ENCODE measurements at regions of chr3 and their contacts with region 1.

Region 1: DNA sequence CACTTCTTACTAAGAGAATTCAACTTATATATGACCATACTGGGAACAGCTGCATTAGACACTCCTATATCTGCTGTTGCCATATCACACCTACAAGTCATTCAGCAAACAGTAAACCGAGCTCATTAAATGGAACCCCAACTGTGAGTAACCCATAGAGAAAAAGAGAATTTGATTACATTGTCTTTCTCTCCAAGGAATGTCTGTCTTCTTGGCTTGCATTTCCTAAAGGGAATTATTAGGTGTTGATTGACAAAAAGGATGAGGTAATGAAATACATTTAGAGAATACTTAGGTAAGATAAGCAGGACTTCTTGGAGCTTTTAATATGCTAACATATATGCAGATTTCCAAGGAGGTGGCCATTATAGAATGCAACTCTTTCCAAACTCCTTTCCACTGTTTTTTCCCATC is 76.8 kb downstream of the SLMAP start:
- DNase-seq: no peak
- ATAC-seq: no peak
- H3K4me3 ChIP-seq: no peak overlapping the region
- H3K27ac ChIP-seq: no peak overlapping the region
- H3K4me1 ChIP-seq: peaks cover 0 to 10% (median 0%) of the 10 kb centered on the region in 9 donors
- H3K27me3 ChIP-seq: no peaks in the 10 kb centered on the region
- CTCF ChIP-seq: no peak

Region 2: GRCh38 chr3:57544181-57545125 is 288.5 kb before region 1 on chr3 and contains the start of gene DNAH12:
- intact Hi-C with region 1: no loop called
- DNase-seq: no peak
- ATAC-seq: peak in 1 of 8 donors; percentile 36
- H3K4me3 ChIP-seq: peak within 1 kb of the TSS in 7 of 10 donors; percentile 3 to 45 (median 35)
- H3K27ac ChIP-seq: peak within 1 kb of the TSS in 2 of 10 donors; percentile 44 to 71
- H3K4me1 ChIP-seq: peaks cover 0 to 23% (median 12%) of the 10 kb centered on the region in 9 donors
- H3K27me3 ChIP-seq: peaks cover 0 to 8% (median 0%) of the 10 kb centered on the region in 7 donors
- CTCF ChIP-seq: no peak
- total RNA-seq, gene DNAH12: 0.02 to 0.19 (median 0.12) TPM in 6 of 10 donors, not detected in the others

Region 3: DNA sequence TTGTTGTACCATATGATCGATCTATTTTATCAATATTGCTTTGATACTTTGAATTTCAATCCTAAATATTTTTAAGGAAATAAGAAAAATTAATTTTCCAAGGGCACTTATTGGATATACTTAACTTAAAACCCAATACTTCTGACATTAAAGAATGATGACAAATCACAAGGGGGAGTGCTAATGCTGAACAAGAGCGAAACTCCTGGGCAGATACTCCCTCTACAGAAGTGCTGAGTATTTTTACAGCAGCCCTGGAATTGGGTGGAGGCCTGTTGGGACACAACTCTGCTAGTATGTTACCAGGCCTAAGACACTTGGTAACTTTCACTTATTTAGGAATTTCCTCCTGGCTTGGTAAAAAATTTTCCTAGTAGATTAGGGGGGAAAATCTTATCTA is 186.2 kb before region 1 on chr3:
- intact Hi-C with region 1: loop called in 9 of 10 experiments (anchors 5 to 10 kb)
- DNase-seq: peak in 1 of 2 donors; percentile 15
- ATAC-seq: peak; percentile 76 to 94 (median 86)
- H3K4me3 ChIP-seq: no peak overlapping the region
- H3K27ac ChIP-seq: peak overlapping the region in 4 of 10 donors; percentile 13 to 56 (median 42)
- H3K4me1 ChIP-seq: peaks cover 0 to 15% (median 6%) of the 10 kb centered on the region in 9 donors
- H3K27me3 ChIP-seq: no peaks in the 10 kb centered on the region
- CTCF ChIP-seq: peak in 6 of 9 donors; percentile 34 to 59 (median 52)

Region 4: GRCh38 chr3:57764794-57765193 is 68.1 kb before region 1 on chr3:
- intact Hi-C with region 1: loop called in 2 of 10 experiments (anchors 5 to 10 kb)
- DNase-seq: no peak
- ATAC-seq: no peak
- H3K4me3 ChIP-seq: no peak overlapping the region
- H3K27ac ChIP-seq: no peak overlapping the region
- H3K4me1 ChIP-seq: peaks cover 0 to 47% (median 27%) of the 10 kb centered on the region in 9 donors
- H3K27me3 ChIP-seq: no peaks in the 10 kb centered on the region
- CTCF ChIP-seq: no peak

Region 5: DNA sequence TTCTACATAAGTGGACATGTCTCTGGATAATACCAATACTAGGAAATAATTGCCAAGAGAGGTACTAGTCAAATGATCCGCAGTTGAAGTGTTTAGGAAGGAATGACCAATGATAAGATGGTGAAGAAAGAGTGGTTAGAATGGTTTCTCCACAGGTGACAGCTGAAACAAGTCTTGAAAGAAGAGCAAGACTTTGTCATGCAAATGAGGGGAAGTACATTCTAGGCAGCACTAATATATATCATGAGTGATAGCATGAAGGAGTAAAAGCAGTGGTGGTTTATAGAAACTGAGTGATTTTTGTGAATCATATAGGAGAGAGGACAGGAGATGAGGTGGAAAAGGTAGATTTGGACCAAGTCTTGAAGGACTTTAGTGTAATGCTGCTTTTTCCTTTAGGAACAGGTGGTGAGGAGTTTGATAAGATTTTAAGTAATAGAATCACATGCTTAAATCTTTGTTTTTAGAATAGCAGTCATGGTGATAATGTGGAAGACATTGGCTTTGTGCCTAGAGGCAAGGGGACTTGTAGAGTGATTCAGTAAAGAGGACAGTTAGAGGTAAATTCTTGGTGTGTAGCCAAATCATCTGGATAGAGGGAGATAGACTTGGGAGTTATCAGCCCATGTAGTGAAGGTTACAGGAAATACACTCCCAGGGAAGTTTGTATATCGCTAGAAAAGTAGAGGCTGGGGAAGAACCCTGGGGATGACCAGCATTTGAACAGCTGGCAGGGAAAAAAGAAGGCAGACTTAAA is 44.9 kb before region 1 on chr3:
- intact Hi-C with region 1: no loop called
- DNase-seq: no peak
- ATAC-seq: no peak
- H3K4me3 ChIP-seq: no peak overlapping the region
- H3K27ac ChIP-seq: no peak overlapping the region
- H3K4me1 ChIP-seq: peaks cover 4 to 41% (median 21%) of the 10 kb centered on the region in 9 donors
- H3K27me3 ChIP-seq: no peaks in the 10 kb centered on the region
- CTCF ChIP-seq: no peak